GM12878 (cell line): ENCODE measurements at regions of chr9 and their contacts with region 1.

Region 1: DNA sequence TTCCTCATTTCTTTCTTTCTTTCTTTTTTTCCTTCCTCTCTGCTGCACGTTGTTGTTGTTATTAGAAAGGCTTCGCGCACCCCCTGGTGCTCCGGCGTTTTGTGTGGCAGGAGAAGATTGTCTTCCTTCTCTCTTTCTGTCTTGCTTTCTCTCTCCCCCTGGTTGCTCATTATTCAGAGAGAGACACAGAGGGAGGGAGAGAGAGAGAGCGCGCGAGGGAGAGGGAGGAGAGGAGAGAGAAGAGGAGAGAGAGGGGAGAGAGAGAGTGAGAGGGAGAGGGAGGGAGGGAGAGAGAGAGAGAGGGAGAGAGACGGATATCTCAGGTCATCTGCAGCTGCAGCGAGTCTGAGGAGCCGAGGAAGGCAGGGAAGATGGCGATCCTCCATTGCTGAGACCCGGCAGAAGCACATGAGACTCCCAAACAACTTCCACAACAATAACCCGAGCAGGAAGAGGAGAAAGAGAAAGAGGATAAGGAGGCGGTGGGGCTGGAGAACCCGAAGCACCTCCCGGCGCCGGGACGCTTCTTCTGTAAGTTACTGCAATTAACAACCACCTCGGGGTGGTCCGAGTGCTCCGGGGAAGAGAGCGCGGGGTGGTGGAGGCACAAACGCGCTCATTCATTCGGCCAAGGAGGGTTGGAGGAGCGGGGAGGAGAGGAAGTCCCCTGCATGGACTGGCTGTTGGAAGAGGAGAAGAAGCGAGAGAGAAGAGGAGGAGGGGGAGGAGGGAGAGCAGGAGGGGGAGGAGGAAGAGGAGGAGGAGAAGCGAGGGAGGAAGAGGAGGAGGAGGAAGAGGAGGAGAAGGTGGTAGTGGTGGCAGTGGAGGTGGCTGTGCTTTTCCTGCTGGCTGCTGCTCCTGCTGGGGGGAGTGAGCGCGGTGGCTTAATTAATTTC is at the start of gene ZNF462:
- DNase-seq: no peak
- ATAC-seq: peak; percentile 42
- H3K4me3 ChIP-seq: no peak within 1 kb of the TSS
- H3K27ac ChIP-seq: no peak within 1 kb of the TSS
- H3K4me1 ChIP-seq: no peaks in the 10 kb centered on the region
- H3K27me3 ChIP-seq: peaks cover 6 to 19% of the 10 kb centered on the region in 2 experiments; a peak in 3 of 4 replicates
- CTCF ChIP-seq: peak in 1 of 3 experiments; percentile 44; a peak in 2 of 6 replicates
- EP300 ChIP-seq: no peak
- POLR2A ChIP-seq: no peak
- RAD21 ChIP-seq: peak; percentile 29; the same call in 1 of the 2 replicates
- polyA plus RNA-seq, gene ZNF462: 0.27 to 0.42 TPM

Region 2: DNA sequence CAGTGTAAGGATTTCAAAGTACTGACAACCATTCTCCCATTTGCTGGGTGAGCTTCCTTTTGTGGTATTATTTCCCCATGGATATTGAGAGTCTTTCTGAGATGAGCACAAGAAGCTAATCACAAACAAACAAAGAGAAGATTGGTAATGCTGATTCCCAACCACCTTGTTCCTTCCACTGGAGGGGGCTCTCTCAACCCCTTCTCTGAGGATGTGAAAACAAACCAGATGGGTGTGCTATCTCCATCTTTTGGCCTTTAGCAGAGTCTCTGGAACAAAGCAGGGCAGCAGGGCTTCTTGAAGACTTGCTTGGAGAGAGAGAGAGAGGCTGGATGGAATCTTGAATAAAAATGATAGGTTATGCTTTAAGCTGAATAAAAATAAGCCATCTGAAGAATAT is 576.8 kb before region 1 on chr9:
- CTCF ChIA-PET with region 1: interaction called, 10 read pairs
- POLR2A ChIA-PET with region 1: no interaction called
- RAD21 ChIA-PET with region 1: interaction called, 14 read pairs
- SMC1A ChIA-PET with region 1: interaction called, 9 read pairs
- in situ Hi-C with region 1: no loop called
- intact Hi-C with region 1: loop called (anchors 5 kb)
- DNase-seq: no peak
- ATAC-seq: peak; percentile 87
- H3K4me3 ChIP-seq: no peak overlapping the region
- H3K27ac ChIP-seq: no peak overlapping the region
- H3K4me1 ChIP-seq: no peaks in the 10 kb centered on the region
- H3K27me3 ChIP-seq: no peaks in the 10 kb centered on the region
- CTCF ChIP-seq: peak in 2 of 3 experiments; percentile 41 to 45; a peak in 4 of 6 replicates
- EP300 ChIP-seq: no peak
- POLR2A ChIP-seq: no peak
- RAD21 ChIP-seq: no peak

Region 3: GRCh38 chr9:106420511-106420944 is 442.5 kb before region 1 on chr9:
- CTCF ChIA-PET with region 1: no interaction called
- POLR2A ChIA-PET with region 1: no interaction called
- RAD21 ChIA-PET with region 1: no interaction called
- SMC1A ChIA-PET with region 1: interaction called, 3 read pairs
- in situ Hi-C with region 1: no loop called
- intact Hi-C with region 1: loop called (anchors 2 kb)
- DNase-seq: peak; percentile 76
- ATAC-seq: peak; percentile 76
- H3K4me3 ChIP-seq: no peak overlapping the region
- H3K27ac ChIP-seq: no peak overlapping the region
- H3K4me1 ChIP-seq: peaks cover 17% of the 10 kb centered on the region
- H3K27me3 ChIP-seq: no peaks in the 10 kb centered on the region
- CTCF ChIP-seq: no peak
- EP300 ChIP-seq: peak; percentile 20 to 68; a peak in 2 of 4 replicates
- POLR2A ChIP-seq: no peak
- RAD21 ChIP-seq: no peak

Region 4: GRCh38 chr9:106697750-106698502 is 165.1 kb before region 1 on chr9:
- CTCF ChIA-PET with region 1: no interaction called
- POLR2A ChIA-PET with region 1: no interaction called
- RAD21 ChIA-PET with region 1: no interaction called
- SMC1A ChIA-PET with region 1: interaction called, 3 read pairs
- in situ Hi-C with region 1: no loop called
- intact Hi-C with region 1: loop called (anchors 5 kb)
- DNase-seq: no peak
- ATAC-seq: no peak
- H3K4me3 ChIP-seq: no peak overlapping the region
- H3K27ac ChIP-seq: no peak overlapping the region
- H3K4me1 ChIP-seq: no peaks in the 10 kb centered on the region
- H3K27me3 ChIP-seq: no peaks in the 10 kb centered on the region
- CTCF ChIP-seq: no peak
- EP300 ChIP-seq: no peak
- POLR2A ChIP-seq: no peak
- RAD21 ChIP-seq: no peak

Region 5: GRCh38 chr9:106846307-106846706 is 16.8 kb before region 1 on chr9:
- CTCF ChIA-PET with region 1: no interaction called
- POLR2A ChIA-PET with region 1: no interaction called
- RAD21 ChIA-PET with region 1: no interaction called
- SMC1A ChIA-PET with region 1: no interaction called
- in situ Hi-C with region 1: no loop called
- intact Hi-C with region 1: no loop called
- DNase-seq: no peak
- ATAC-seq: no peak
- H3K4me3 ChIP-seq: no peak overlapping the region
- H3K27ac ChIP-seq: no peak overlapping the region
- H3K4me1 ChIP-seq: no peaks in the 10 kb centered on the region
- H3K27me3 ChIP-seq: peaks cover 0 to 2% of the 10 kb centered on the region in 2 experiments; a peak in 1 of 4 replicates
- CTCF ChIP-seq: no peak
- EP300 ChIP-seq: no peak
- POLR2A ChIP-seq: no peak
- RAD21 ChIP-seq: no peak

Region 6: GRCh38 chr9:106878924-106879323 is 15.9 kb after region 1 on chr9:
- CTCF ChIA-PET with region 1: interaction called, 4 read pairs
- POLR2A ChIA-PET with region 1: interaction called, 8 read pairs
- RAD21 ChIA-PET with region 1: interaction called, 8 read pairs
- SMC1A ChIA-PET with region 1: interaction called, 219 read pairs
- in situ Hi-C with region 1: no loop called
- intact Hi-C with region 1: no loop called
- DNase-seq: no peak
- ATAC-seq: peak; percentile 30
- H3K4me3 ChIP-seq: no peak overlapping the region
- H3K27ac ChIP-seq: no peak overlapping the region
- H3K4me1 ChIP-seq: no peaks in the 10 kb centered on the region
- H3K27me3 ChIP-seq: no peaks in the 10 kb centered on the region
- CTCF ChIP-seq: no peak
- EP300 ChIP-seq: no peak; a peak in 1 of 4 replicates
- POLR2A ChIP-seq: no peak
- RAD21 ChIP-seq: no peak

Region 7: GRCh38 chr9:106911951-106912350 is 48.9 kb after region 1 on chr9:
- CTCF ChIA-PET with region 1: interaction called, 3 read pairs
- POLR2A ChIA-PET with region 1: interaction called, 5 read pairs
- RAD21 ChIA-PET with region 1: interaction called, 3 read pairs
- SMC1A ChIA-PET with region 1: interaction called, 3 read pairs
- in situ Hi-C with region 1: no loop called
- intact Hi-C with region 1: loop called (anchors 2 kb)
- DNase-seq: no peak
- ATAC-seq: no peak
- H3K4me3 ChIP-seq: no peak overlapping the region
- H3K27ac ChIP-seq: no peak overlapping the region
- H3K4me1 ChIP-seq: no peaks in the 10 kb centered on the region
- H3K27me3 ChIP-seq: no peaks in the 10 kb centered on the region
- CTCF ChIP-seq: no peak
- EP300 ChIP-seq: no peak
- POLR2A ChIP-seq: no peak
- RAD21 ChIP-seq: no peak

Region 8: DNA sequence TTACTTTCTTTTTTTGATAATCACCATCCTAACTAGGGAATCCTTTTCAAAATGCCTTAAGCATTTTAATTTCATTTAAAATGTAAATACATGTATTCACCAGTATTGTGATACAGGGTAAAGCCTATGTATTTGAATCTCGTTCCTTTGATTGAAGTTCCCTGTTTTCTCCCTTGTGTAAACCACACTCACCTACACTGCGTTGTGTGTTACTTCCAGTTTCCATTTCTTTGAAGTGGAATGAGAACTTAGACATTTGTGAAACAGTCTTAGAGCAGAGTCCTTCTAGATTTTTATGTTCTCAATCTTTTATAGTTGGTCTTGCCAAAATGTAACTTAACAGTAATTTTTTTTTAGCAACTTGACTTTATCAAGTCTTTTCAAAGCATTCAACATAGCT is 101.3 kb after region 1 on chr9:
- CTCF ChIA-PET with region 1: no interaction called
- POLR2A ChIA-PET with region 1: no interaction called
- RAD21 ChIA-PET with region 1: interaction called, 3 read pairs
- SMC1A ChIA-PET with region 1: interaction called, 20 read pairs
- in situ Hi-C with region 1: no loop called
- intact Hi-C with region 1: no loop called
- DNase-seq: peak; percentile 44
- ATAC-seq: peak; percentile 96
- H3K4me3 ChIP-seq: no peak overlapping the region
- H3K27ac ChIP-seq: no peak overlapping the region
- H3K4me1 ChIP-seq: no peaks in the 10 kb centered on the region
- H3K27me3 ChIP-seq: no peaks in the 10 kb centered on the region
- CTCF ChIP-seq: no peak
- EP300 ChIP-seq: peak in 1 of 2 experiments; percentile 86; a peak in 3 of 4 replicates
- POLR2A ChIP-seq: no peak
- RAD21 ChIP-seq: no peak

Region 9: GRCh38 chr9:107067739-107068416 is 204.8 kb after region 1 on chr9:
- CTCF ChIA-PET with region 1: no interaction called
- POLR2A ChIA-PET with region 1: no interaction called
- RAD21 ChIA-PET with region 1: no interaction called
- SMC1A ChIA-PET with region 1: no interaction called
- in situ Hi-C with region 1: no loop called
- intact Hi-C with region 1: no loop called
- DNase-seq: no peak
- ATAC-seq: no peak
- H3K4me3 ChIP-seq: no peak overlapping the region
- H3K27ac ChIP-seq: no peak overlapping the region
- H3K4me1 ChIP-seq: no peaks in the 10 kb centered on the region
- H3K27me3 ChIP-seq: no peaks in the 10 kb centered on the region; a peak in 1 of 4 replicates
- CTCF ChIP-seq: no peak
- EP300 ChIP-seq: no peak
- POLR2A ChIP-seq: no peak
- RAD21 ChIP-seq: no peak